ENCODE measurements at regions of chr1 and their contacts with region 1.

Region 1: DNA sequence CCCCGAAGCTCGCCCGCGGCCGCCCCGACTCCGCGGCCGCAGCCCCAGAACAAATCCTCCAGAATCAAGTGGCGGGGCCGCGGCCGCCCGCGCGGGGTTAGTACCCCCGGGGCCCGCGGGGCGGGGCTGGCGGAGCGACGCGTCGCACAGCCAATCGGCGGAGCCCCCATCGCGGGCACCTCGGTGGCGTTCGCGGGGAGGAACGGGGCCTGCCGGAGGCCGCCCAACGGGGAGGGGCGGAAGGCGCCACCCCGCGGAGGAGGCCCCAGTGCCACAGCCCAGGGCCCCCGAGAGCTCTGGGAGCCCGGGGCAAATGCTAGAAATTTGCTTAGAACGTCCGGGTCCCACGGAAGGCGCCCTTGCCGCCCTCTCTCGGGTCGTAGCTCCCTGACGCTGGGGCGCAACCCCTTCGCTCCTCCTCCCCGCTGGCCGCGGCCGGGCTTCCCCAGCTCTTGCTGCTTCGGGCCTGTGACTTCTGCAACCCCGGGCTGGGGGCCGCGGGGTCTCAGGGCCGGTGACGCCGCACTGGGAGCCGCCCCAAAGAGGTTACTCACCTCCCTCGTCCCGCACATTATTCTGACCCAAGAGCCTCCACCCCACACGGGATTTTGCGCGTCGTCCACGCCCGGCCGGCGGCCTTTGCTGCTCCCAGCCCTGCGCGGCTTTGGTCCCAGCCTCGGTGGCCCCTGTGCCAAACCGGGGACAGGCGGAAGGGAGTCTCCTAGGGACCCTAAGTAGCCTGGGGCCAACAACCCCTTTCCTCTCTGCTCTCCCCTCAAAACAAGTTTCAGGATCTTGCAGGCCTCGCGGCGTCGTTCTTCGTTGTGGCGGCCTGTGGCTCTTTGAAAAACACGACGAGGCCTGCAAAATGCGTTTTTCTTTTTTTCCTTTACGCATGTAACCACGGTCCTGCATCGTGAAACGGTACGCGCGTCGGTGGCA is at the start of gene RUNX3:
- DNase-seq: peak; percentile 93
- H3K4me3 Mint-ChIP-seq: peak within 1 kb of the TSS; percentile 94
- H3K27ac Mint-ChIP-seq: peak within 1 kb of the TSS; percentile 92
- H3K4me1 Mint-ChIP-seq: peaks cover 66% of the 10 kb centered on the region
- H3K27me3 Mint-ChIP-seq: no peaks in the 10 kb centered on the region
- total RNA-seq, gene RUNX3: 72.3 to 83.8 TPM

Region 2: GRCh38 chr1:24941564-24941963 is 11.1 kb after region 1 on chr1:
- CTCF ChIA-PET with region 1: interaction called, 14 read pairs
- intact Hi-C with region 1: no loop called
- DNase-seq: no peak
- H3K4me3 Mint-ChIP-seq: no peak overlapping the region
- H3K27ac Mint-ChIP-seq: no peak overlapping the region
- H3K4me1 Mint-ChIP-seq: peaks cover 13% of the 10 kb centered on the region
- H3K27me3 Mint-ChIP-seq: no peaks in the 10 kb centered on the region

Region 3: DNA sequence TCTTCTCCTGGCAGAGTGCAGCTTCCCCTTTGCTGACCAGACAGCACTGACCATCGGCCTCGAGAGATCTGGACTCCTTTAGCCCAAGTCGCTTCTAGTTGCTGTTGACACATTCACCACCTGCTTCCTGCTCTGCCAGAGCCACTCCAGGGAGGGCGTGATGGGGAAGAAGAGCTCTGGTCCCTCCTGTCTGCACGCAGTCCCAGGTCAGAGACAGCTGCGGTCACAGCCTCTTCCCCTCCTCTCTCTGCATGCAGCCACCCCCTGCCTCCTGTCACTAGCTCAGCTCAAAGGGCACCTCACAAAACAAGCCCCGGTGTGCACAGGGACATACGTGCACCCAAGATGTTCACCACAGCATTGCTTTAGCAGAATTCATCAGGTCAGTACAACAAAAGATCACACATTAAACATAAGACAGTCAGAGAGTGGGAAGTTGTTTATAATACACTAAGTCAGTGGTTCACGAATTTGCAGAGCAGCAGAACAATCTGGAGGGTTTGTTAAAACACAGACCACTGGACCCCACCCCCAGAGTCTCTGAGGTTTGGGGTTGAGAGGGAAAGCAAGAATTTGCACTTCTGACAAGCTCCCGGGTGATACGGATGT is 169.0 kb after region 1 on chr1:
- CTCF ChIA-PET with region 1: interaction called, 32 read pairs
- intact Hi-C with region 1: loop called (anchors 2 kb)
- DNase-seq: peak; percentile 39
- H3K4me3 Mint-ChIP-seq: no peak overlapping the region
- H3K27ac Mint-ChIP-seq: peak overlapping the region; percentile 25
- H3K4me1 Mint-ChIP-seq: peaks cover 54% of the 10 kb centered on the region
- H3K27me3 Mint-ChIP-seq: no peaks in the 10 kb centered on the region